Ascending aorta (tissue), 2 donors: ENCODE measurements at regions of chr16 and their contacts with region 1.

Region 1: GRCh38 chr16:28491970-28492474 is at the start of gene CLN3:
- DNase-seq: peak; percentile 73 to 95
- H3K4me3 ChIP-seq: peak within 1 kb of the TSS; percentile 72 to 88
- H3K27ac ChIP-seq: peak within 1 kb of the TSS; percentile 88 to 93
- H3K4me1 ChIP-seq: peaks cover 2 to 4% of the 10 kb centered on the region in 2 donors
- H3K27me3 ChIP-seq: no peaks in the 10 kb centered on the region
- CTCF ChIP-seq: no peak
- total RNA-seq, gene CLN3: 16.1 TPM

Region 2: GRCh38 chr16:27960619-27961295 is 531.3 kb before region 1 on chr16:
- intact Hi-C with region 1: no loop called
- DNase-seq: peak in 1 of 2 donors; percentile 49
- H3K4me3 ChIP-seq: no peak overlapping the region
- H3K27ac ChIP-seq: no peak overlapping the region
- H3K4me1 ChIP-seq: no peaks in the 10 kb centered on the region
- H3K27me3 ChIP-seq: no peaks in the 10 kb centered on the region
- CTCF ChIP-seq: no peak

Region 3: GRCh38 chr16:28211712-28212534 is 280.1 kb before region 1 on chr16 and contains the start of gene XPO6:
- intact Hi-C with region 1: loop called (anchors 2 kb)
- DNase-seq: peak; percentile 66 to 97
- H3K4me3 ChIP-seq: peak within 1 kb of the TSS; percentile 92 to 96
- H3K27ac ChIP-seq: peak within 1 kb of the TSS; percentile 86 to 94
- H3K4me1 ChIP-seq: peaks cover 0 to 11% of the 10 kb centered on the region in 2 donors
- H3K27me3 ChIP-seq: no peaks in the 10 kb centered on the region
- CTCF ChIP-seq: peak in 1 of 3 experiments; percentile 12
- total RNA-seq, gene XPO6: 180 TPM

Region 4: DNA sequence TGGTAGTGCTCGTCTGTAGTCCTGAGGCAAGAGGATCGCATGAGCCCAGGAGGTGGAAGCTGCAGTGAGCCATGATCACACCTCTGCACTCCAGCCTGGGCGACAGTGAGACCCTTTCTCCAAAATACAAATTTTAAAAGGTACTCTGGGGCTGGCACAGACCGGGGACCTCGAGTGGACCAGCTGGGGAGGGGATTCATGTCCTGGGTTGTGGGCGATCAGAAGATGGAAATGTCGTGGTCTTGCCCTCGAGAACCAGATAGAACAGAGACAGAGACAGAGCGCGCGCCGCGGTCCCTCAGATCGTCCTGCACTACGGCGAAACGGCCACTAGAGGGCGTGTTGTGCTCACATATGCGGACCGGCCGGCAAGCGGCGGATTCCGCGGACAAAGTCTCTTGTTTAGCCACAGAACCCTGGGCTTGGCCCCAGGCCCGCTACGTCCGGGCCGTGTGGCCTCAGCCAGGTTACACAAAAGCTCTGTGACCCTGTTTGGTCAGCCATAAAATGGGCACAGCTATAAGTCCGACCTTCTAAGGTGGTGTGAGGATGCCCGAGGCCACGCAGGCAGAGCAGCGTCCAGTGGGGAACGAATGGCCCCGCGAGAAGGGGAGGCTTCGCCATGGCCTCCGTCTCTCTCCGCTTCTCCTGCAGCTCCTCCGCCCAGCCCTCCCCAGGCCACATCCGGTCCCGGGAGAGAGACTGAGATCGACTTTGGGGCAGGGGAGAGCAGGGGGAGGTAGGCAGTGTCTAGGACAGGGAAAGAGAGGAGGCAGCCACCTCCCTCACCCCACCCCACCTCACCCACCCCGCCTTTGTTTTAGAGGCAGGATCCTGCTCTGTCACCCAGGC is 214.3 kb before region 1 on chr16:
- intact Hi-C with region 1: loop called (anchors 5 kb)
- DNase-seq: peak; percentile 24 to 89
- H3K4me3 ChIP-seq: peak overlapping the region; percentile 52 to 58
- H3K27ac ChIP-seq: no peak overlapping the region
- H3K4me1 ChIP-seq: no peaks in the 10 kb centered on the region
- H3K27me3 ChIP-seq: no peaks in the 10 kb centered on the region
- CTCF ChIP-seq: peak; percentile 86 to 98 (median 90)

Region 5: DNA sequence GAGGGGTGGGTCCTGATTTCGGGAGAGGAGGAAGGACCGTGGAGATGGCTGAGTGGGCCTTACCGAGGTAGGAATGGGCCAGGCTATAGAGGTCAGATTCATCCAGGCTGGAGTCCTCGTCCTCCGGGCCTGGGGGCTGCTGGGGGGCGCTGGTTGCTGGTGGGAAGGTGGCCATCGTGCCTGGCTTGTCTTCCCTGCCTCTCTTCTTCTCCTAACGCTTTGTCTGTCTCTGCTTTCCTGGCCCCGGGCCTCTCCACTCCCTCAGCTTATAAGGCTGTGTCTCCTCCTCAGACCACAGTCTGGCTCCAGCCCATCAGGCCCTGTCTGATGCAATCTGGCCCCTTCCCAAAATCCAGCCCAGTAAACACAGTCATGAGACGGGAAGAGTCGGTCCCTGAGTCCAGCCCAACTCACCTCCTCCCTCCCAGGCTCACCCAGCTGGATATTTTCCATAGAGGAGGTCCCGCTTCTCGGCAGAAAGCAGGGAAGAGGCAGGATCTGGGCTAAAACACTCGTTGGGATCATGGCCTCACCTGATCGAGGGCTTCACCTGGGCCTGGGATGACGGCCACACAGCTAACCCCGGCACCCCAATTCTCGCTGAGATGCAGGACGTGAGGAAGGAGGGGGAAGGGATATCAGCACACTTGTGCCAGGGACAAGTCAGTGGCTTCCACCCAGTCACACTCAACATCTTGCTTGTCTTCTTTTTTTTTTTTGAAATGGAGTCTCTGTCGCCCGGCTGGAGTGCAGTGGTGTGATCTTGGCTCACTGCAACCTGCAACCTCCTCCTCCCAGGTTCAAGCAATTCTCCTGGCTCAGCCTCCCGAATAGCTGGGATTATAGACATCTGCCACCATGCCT is 46.9 kb after region 1 on chr16 and contains the start of gene NUPR1:
- intact Hi-C with region 1: loop called (anchors 2 kb)
- DNase-seq: peak; percentile 81 to 97
- H3K4me3 ChIP-seq: peak within 1 kb of the TSS; percentile 60 to 74
- H3K27ac ChIP-seq: peak within 1 kb of the TSS; percentile 80 to 95
- H3K4me1 ChIP-seq: peaks cover 9 to 20% of the 10 kb centered on the region in 2 donors
- H3K27me3 ChIP-seq: no peaks in the 10 kb centered on the region
- CTCF ChIP-seq: no peak
- total RNA-seq, gene NUPR1: 290 TPM

Region 6: GRCh38 chr16:28553776-28554633 is 62.0 kb after region 1 on chr16 and contains the start of gene SGF29:
- intact Hi-C with region 1: loop called (anchors 1 kb)
- DNase-seq: peak; percentile 53 to 95
- H3K4me3 ChIP-seq: peak within 1 kb of the TSS; percentile 61 to 62
- H3K27ac ChIP-seq: peak within 1 kb of the TSS; percentile 87 to 96
- H3K4me1 ChIP-seq: peaks cover 0 to 7% of the 10 kb centered on the region in 2 donors
- H3K27me3 ChIP-seq: no peaks in the 10 kb centered on the region
- CTCF ChIP-seq: peak in 2 of 3 experiments; percentile 32 to 35
- total RNA-seq, gene SGF29: 14.0 TPM

Region 7: DNA sequence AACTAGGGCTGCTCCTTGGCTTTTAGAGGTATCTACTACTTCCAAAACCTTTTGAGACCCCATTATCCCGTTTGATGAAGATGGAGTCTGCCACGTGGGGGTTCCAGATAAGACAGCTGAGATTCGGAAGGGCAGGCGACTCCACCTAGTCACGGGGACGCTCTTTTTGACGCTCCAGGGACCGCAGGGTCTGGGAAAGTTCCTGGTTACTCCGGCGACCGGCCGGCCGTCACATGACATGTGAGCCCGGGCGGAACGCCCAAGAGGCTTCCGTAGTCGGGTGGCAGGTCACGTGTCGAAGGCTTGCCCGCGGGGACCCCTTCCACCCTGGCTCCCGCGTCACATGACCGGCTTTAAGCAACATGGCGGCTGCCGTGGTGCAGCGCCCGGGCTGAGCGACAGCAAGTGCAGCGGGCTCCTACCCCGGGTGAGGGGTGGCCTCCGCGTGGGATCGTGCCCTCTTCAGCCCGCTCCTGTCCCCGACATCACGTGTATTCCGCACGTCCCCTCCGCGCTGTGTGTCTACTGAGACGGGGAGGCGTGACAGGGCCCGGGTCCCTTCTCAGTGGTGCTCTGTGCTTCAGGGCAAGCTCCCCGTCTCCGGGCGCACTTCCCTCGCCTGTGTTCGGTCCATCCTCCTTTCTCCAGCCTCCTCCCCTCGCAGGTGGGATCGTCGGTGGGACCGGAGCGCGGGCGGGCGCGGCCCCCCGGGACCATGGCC is 482.6 kb after region 1 on chr16 and contains the start of gene SPNS1:
- intact Hi-C with region 1: loop called (anchors 5 kb)
- DNase-seq: peak; percentile 84 to 99
- H3K4me3 ChIP-seq: peak within 1 kb of the TSS; percentile 90 to 93
- H3K27ac ChIP-seq: peak within 1 kb of the TSS; percentile 77 to 80
- H3K4me1 ChIP-seq: peaks cover 5 to 20% of the 10 kb centered on the region in 2 donors
- H3K27me3 ChIP-seq: no peaks in the 10 kb centered on the region
- CTCF ChIP-seq: no peak
- total RNA-seq, gene SPNS1: 59.3 TPM